Caco-2 (cell line): ENCODE measurements at regions of chr11 and their contacts with region 1.

Region 1: GRCh38 chr11:36041988-36042611 is 98.2 kb downstream of the LDLRAD3 start:
- DNase-seq: peak in 1 of 2 experiments; percentile 32
- H3K4me3 ChIP-seq: no peak overlapping the region
- H3K4me3 Mint-ChIP-seq: no peak overlapping the region
- H3K27ac Mint-ChIP-seq: no peak overlapping the region
- H3K4me1 ChIP-seq: no peaks in the 10 kb centered on the region
- H3K4me1 Mint-ChIP-seq: no peaks in the 10 kb centered on the region
- H3K27me3 ChIP-seq: no peaks in the 10 kb centered on the region
- H3K27me3 Mint-ChIP-seq: no peaks in the 10 kb centered on the region
- CTCF ChIP-seq: peak; percentile 49 to 52

Region 2: GRCh38 chr11:36056160-36056751 is 14.2 kb after region 1 on chr11:
- CTCF ChIA-PET with region 1: interaction called, 6 read pairs
- POLR2A ChIA-PET with region 1: no interaction called
- intact Hi-C with region 1: loop called (anchors 1 kb)
- DNase-seq: peak in 1 of 2 experiments; percentile 38
- H3K4me3 ChIP-seq: no peak overlapping the region
- H3K4me3 Mint-ChIP-seq: no peak overlapping the region
- H3K27ac Mint-ChIP-seq: no peak overlapping the region
- H3K4me1 ChIP-seq: no peaks in the 10 kb centered on the region
- H3K4me1 Mint-ChIP-seq: no peaks in the 10 kb centered on the region
- H3K27me3 ChIP-seq: no peaks in the 10 kb centered on the region
- H3K27me3 Mint-ChIP-seq: no peaks in the 10 kb centered on the region
- CTCF ChIP-seq: peak; percentile 26 to 70

Region 3: GRCh38 chr11:36149538-36150242 is 107.6 kb after region 1 on chr11:
- CTCF ChIA-PET with region 1: no interaction called
- POLR2A ChIA-PET with region 1: no interaction called
- intact Hi-C with region 1: loop called (anchors 2 kb)
- DNase-seq: peak; percentile 79 to 87
- H3K4me3 ChIP-seq: no peak overlapping the region
- H3K4me3 Mint-ChIP-seq: peak overlapping the region; percentile 2
- H3K27ac Mint-ChIP-seq: peak overlapping the region; percentile 89
- H3K4me1 ChIP-seq: peaks cover 30% of the 10 kb centered on the region
- H3K4me1 Mint-ChIP-seq: peaks cover 15% of the 10 kb centered on the region
- H3K27me3 ChIP-seq: no peaks in the 10 kb centered on the region
- H3K27me3 Mint-ChIP-seq: no peaks in the 10 kb centered on the region
- CTCF ChIP-seq: peak; percentile 36 to 58

Region 4: GRCh38 chr11:36258730-36259360 is 216.7 kb after region 1 on chr11:
- CTCF ChIA-PET with region 1: interaction called, 9 read pairs
- POLR2A ChIA-PET with region 1: no interaction called
- intact Hi-C with region 1: loop called (anchors 2 kb)
- DNase-seq: peak; percentile 73 to 76
- H3K4me3 ChIP-seq: no peak overlapping the region
- H3K4me3 Mint-ChIP-seq: no peak overlapping the region
- H3K27ac Mint-ChIP-seq: peak overlapping the region; percentile 43
- H3K4me1 ChIP-seq: peaks cover 12% of the 10 kb centered on the region; the same call in 1 of the 2 replicates
- H3K4me1 Mint-ChIP-seq: peaks cover 12% of the 10 kb centered on the region
- H3K27me3 ChIP-seq: no peaks in the 10 kb centered on the region
- H3K27me3 Mint-ChIP-seq: no peaks in the 10 kb centered on the region
- CTCF ChIP-seq: peak; percentile 62 to 79

Region 5: GRCh38 chr11:36265793-36266628 is 223.9 kb after region 1 on chr11:
- CTCF ChIA-PET with region 1: interaction called, 8 read pairs
- POLR2A ChIA-PET with region 1: no interaction called
- intact Hi-C with region 1: loop called (anchors 2 kb)
- DNase-seq: peak; percentile 54 to 75
- H3K4me3 ChIP-seq: no peak overlapping the region
- H3K4me3 Mint-ChIP-seq: no peak overlapping the region
- H3K27ac Mint-ChIP-seq: no peak overlapping the region
- H3K4me1 ChIP-seq: no peaks in the 10 kb centered on the region
- H3K4me1 Mint-ChIP-seq: peaks cover 6% of the 10 kb centered on the region
- H3K27me3 ChIP-seq: no peaks in the 10 kb centered on the region
- H3K27me3 Mint-ChIP-seq: no peaks in the 10 kb centered on the region
- CTCF ChIP-seq: peak; percentile 91 to 92